ENCODE measurements at regions of chr4 and their contacts with region 1.

Region 1: GRCh38 chr4:25925486-25926201 is 11.6 kb downstream of the SMIM20 start:
- DNase-seq: no peak
- H3K4me3 ChIP-seq: no peak overlapping the region
- CTCF ChIP-seq: peak; percentile 57

Region 2: GRCh38 chr4:25424539-25425228 is 501.0 kb before region 1 on chr4:
- CTCF ChIA-PET with region 1: no interaction called
- POLR2A ChIA-PET with region 1: no interaction called
- DNase-seq: no peak
- H3K4me3 ChIP-seq: no peak overlapping the region
- CTCF ChIP-seq: no peak

Region 3: DNA sequence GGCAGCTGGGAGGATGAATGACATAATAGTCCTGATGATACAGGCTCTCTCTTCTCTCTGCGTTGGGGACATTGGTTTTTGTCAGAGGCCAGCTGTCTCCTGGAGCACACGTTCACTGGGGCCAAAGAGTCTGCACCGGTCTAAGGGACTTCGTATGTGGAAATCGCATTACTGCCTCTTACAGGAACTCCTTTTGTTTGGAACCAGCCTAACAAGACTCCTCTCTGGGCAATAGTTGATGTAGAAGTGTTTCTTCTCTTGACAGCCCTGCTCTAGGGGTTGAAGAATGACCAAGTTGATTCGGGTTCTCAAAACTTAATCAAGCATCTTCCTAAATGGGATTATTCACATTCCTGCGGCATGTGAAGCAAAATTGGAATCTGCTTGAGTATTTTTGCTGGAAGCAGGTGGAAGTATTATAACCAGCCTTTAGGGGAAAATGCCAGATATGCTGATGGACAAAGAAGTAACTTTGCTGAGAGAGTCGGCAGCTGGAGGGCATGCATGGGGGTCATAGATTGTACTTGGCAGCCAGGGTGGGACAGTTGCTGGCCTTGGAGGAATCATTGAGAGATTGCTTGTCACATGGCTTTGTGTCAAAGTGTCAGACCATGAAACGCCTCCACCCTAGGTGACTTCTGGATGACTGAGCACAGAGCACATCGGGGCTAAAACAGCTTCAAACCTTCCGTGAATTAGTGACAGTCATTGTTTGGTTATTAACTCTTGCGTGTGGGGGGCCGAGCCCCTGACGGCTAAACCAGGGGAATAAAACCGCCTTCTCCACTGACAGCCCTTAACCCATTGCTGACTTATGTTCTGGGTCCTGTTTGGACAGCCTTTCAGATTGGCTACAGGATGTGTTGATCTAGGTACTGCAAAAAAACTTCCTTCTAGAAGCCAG is 304.4 kb before region 1 on chr4:
- CTCF ChIA-PET with region 1: no interaction called
- POLR2A ChIA-PET with region 1: no interaction called
- DNase-seq: no peak
- H3K4me3 ChIP-seq: no peak overlapping the region
- CTCF ChIP-seq: no peak

Region 4: GRCh38 chr4:25913851-25914669 is 11.6 kb before region 1 on chr4 and contains the start of gene SMIM20:
- CTCF ChIA-PET with region 1: interaction called, 10 read pairs
- POLR2A ChIA-PET with region 1: interaction called, 3 read pairs
- DNase-seq: peak; percentile 23
- H3K4me3 ChIP-seq: peak within 1 kb of the TSS; percentile 89
- CTCF ChIP-seq: no peak

Region 5: DNA sequence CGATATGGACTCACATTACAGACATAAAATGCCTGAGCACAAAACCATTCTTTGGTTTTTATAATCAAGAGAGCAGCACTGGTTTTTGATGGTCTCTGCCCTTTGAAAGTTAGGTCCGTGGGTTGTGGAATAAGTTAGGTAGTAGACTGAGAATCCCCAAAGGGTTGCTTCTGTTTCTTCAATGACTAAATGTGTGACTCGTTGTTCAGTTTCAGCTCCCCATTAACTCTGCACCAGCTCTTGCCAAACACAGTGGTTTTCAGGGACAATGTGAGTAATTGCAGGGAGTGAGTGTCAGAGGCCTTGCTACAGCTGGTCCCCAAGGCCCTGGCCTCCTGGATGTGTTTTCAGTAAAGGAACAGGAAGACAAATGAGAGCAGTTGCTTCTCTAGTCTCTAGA is 13.1 kb after region 1 on chr4:
- CTCF ChIA-PET with region 1: interaction called, 11 read pairs
- POLR2A ChIA-PET with region 1: no interaction called
- DNase-seq: peak; percentile 21
- H3K4me3 ChIP-seq: no peak overlapping the region
- CTCF ChIP-seq: no peak

Region 6: DNA sequence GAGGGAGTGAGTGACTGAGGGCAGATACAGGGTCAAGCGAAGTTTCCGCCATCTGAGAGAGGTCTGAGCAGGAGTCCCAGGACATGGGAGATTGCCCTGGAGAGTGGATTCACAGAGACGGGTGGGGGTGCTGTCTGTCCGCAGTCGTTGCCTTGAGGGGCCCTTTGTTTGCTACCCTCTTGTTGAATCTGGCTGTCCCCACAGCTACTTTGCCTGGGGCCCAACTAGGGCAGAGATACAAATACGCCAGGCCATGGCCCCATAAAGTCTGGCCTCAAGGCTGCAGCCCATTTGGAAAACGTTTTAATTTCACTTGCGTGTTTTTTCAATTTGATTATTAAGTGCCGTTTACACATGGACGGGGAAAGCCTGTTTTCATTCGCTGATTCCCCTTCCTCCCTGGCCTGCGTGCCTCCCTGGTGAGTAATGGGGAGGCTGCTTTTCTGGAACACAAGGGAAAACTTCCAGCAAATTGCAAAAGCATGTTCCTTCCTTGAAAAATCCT is 122.8 kb after region 1 on chr4:
- CTCF ChIA-PET with region 1: no interaction called
- POLR2A ChIA-PET with region 1: no interaction called
- DNase-seq: peak; percentile 56
- H3K4me3 ChIP-seq: peak overlapping the region; percentile 18
- CTCF ChIP-seq: no peak

Measured in AG04449 (cell line).